Ascending aorta (tissue), 2 donors: ENCODE measurements at regions of chrX and their contacts with region 1.

Region 1: GRCh38 chrX:37825209-37825842 is 22.0 kb downstream of the DYNLT3 start:
- DNase-seq: peak in 1 of 2 donors; percentile 68
- H3K4me3 ChIP-seq: no peak overlapping the region
- H3K27ac ChIP-seq: no peak overlapping the region
- H3K4me1 ChIP-seq: no peaks in the 10 kb centered on the region
- H3K27me3 ChIP-seq: no peaks in the 10 kb centered on the region
- CTCF ChIP-seq: peak; percentile 74 to 83 (median 81)

Region 2: GRCh38 chrX:37509349-37509748 is 316.0 kb before region 1 on chrX:
- intact Hi-C with region 1: loop called (anchors 1 kb)
- DNase-seq: no peak
- H3K4me3 ChIP-seq: no peak overlapping the region
- H3K27ac ChIP-seq: no peak overlapping the region
- H3K4me1 ChIP-seq: no peaks in the 10 kb centered on the region
- H3K27me3 ChIP-seq: no peaks in the 10 kb centered on the region
- CTCF ChIP-seq: peak; percentile 23 to 51 (median 34)

Region 3: GRCh38 chrX:37578045-37578444 is 247.3 kb before region 1 on chrX:
- intact Hi-C with region 1: loop called (anchors 5 kb)
- DNase-seq: no peak
- H3K4me3 ChIP-seq: no peak overlapping the region
- H3K27ac ChIP-seq: peak overlapping the region in 1 of 2 donors; percentile 48
- H3K4me1 ChIP-seq: peaks cover 0 to 3% of the 10 kb centered on the region in 2 donors
- H3K27me3 ChIP-seq: no peaks in the 10 kb centered on the region
- CTCF ChIP-seq: no peak

Region 4: DNA sequence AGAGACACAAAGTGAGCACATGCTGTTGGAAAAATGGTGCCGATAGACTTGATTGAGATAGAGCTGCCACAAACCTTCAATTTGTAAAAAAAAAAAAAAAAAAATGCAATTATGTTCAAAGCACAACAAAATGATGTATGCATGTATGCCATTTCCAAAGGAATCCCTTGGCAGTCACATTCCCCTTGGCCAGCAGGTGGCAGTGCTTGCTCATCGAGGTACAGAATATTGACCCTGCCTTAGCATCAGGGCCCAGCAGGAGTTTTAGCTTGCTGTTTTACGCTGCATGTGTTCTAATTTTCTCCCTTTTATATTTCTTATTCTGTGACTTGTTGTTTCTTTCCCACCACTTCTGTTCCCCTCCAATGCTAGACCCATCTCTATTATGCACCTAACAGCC is 80.0 kb before region 1 on chrX:
- intact Hi-C with region 1: loop called (anchors 5 kb)
- DNase-seq: peak; percentile 29 to 77
- H3K4me3 ChIP-seq: no peak overlapping the region
- H3K27ac ChIP-seq: no peak overlapping the region
- H3K4me1 ChIP-seq: no peaks in the 10 kb centered on the region
- H3K27me3 ChIP-seq: no peaks in the 10 kb centered on the region
- CTCF ChIP-seq: peak; percentile 42 to 76 (median 66)